CD8-positive, alpha-beta memory T cell (primary cell): ENCODE measurements at regions of chr11 and their contacts with region 1.

Region 1: GRCh38 chr11:18721561-18722292 is 4.3 kb downstream of the IGSF22 start:
- DNase-seq: peak; percentile 28 to 55 (median 39)
- H3K4me3 ChIP-seq: peak overlapping the region; percentile 78
- H3K4me3 Mint-ChIP-seq: peak overlapping the region; percentile 83 to 94 (median 94)
- H3K27ac ChIP-seq: no peak overlapping the region
- H3K27ac Mint-ChIP-seq: peak overlapping the region in 7 of 8 donors; percentile 54 to 96 (median 84)
- H3K4me1 ChIP-seq: no peaks in the 10 kb centered on the region
- H3K4me1 Mint-ChIP-seq: peaks cover 4 to 12% (median 9%) of the 10 kb centered on the region in 3 donors
- H3K27me3 ChIP-seq: no peaks in the 10 kb centered on the region
- H3K27me3 Mint-ChIP-seq: peaks cover 2 to 3% of the 10 kb centered on the region in 2 donors

Region 2: DNA sequence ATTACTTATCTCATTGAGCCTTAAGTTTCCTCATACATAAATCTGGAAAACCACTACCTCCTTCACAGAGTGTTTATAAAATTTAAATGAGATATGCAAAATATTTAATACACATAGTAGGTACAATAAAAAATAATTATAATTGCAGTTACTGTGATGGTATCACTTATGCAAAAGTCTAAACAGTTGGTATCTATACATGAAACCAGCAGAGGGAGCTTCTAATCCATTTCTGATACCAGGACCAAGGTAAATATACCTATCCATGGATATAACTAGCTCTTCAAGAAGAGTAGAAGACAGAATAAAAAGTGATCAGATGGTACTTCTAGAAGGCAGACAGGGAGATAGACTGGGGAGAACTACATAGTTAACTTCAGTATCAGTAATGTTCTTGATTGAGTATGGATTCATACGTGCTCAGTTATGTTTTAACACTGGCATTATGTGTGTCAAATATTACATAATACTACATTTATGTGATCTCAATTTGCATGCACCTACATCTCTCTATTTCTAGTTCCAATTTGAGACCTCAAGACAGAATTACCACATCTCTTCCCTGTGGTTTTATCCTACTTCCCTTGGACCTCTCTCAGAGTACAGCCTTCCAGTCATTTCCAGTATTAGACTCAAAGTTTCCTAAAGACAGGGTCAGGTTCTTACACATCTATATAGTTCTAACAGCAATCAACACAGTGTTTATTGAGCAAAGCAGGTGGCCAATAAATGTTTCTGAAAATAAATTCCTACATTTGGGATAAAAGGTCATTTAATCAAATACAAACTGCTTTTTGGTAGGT is 181.3 kb before region 1 on chr11:
- CTCF ChIA-PET with region 1: interaction called, 12 read pairs
- POLR2A ChIA-PET with region 1: no interaction called
- DNase-seq: peak in 2 of 5 donors; percentile 31 to 37
- H3K4me3 ChIP-seq: no peak overlapping the region
- H3K4me3 Mint-ChIP-seq: no peak overlapping the region
- H3K27ac ChIP-seq: no peak overlapping the region
- H3K27ac Mint-ChIP-seq: peak overlapping the region in 5 of 8 donors; percentile 11 to 81 (median 66)
- H3K4me1 ChIP-seq: no peaks in the 10 kb centered on the region
- H3K4me1 Mint-ChIP-seq: peaks cover 0 to 6% (median 0%) of the 10 kb centered on the region in 3 donors
- H3K27me3 ChIP-seq: no peaks in the 10 kb centered on the region
- H3K27me3 Mint-ChIP-seq: no peaks in the 10 kb centered on the region

Region 3: GRCh38 chr11:18634140-18635032 is 87.3 kb before region 1 on chr11 and contains the start of gene SPTY2D1:
- CTCF ChIA-PET with region 1: interaction called, 11 read pairs
- POLR2A ChIA-PET with region 1: no interaction called
- DNase-seq: peak; percentile 94 to 99 (median 98)
- H3K4me3 ChIP-seq: peak within 1 kb of the TSS; percentile 99
- H3K4me3 Mint-ChIP-seq: peak within 1 kb of the TSS; percentile 90 to 99 (median 96)
- H3K27ac ChIP-seq: peak within 1 kb of the TSS; percentile 93
- H3K27ac Mint-ChIP-seq: peak within 1 kb of the TSS; percentile 96 to 100 (median 98)
- H3K4me1 ChIP-seq: peaks cover 17% of the 10 kb centered on the region
- H3K4me1 Mint-ChIP-seq: peaks cover 27 to 39% (median 38%) of the 10 kb centered on the region in 3 donors
- H3K27me3 ChIP-seq: no peaks in the 10 kb centered on the region
- H3K27me3 Mint-ChIP-seq: peaks cover 4 to 5% of the 10 kb centered on the region in 2 donors
- total RNA-seq, gene SPTY2D1: 23.7 to 27.3 TPM

Region 4: GRCh38 chr11:18698341-18699268 is 23.1 kb before region 1 on chr11 and contains the start of gene TMEM86A:
- CTCF ChIA-PET with region 1: interaction called, 44 read pairs
- POLR2A ChIA-PET with region 1: no interaction called
- DNase-seq: peak; percentile 87 to 95 (median 91)
- H3K4me3 ChIP-seq: peak within 1 kb of the TSS; percentile 29
- H3K4me3 Mint-ChIP-seq: peak within 1 kb of the TSS; percentile 77 to 92 (median 85)
- H3K27ac ChIP-seq: no peak within 1 kb of the TSS
- H3K27ac Mint-ChIP-seq: peak within 1 kb of the TSS; percentile 48 to 96 (median 88)
- H3K4me1 ChIP-seq: peaks cover 12% of the 10 kb centered on the region
- H3K4me1 Mint-ChIP-seq: peaks cover 12 to 19% (median 13%) of the 10 kb centered on the region in 3 donors
- H3K27me3 ChIP-seq: no peaks in the 10 kb centered on the region
- H3K27me3 Mint-ChIP-seq: no peaks in the 10 kb centered on the region
- total RNA-seq, gene TMEM86A: 1.0 to 1.3 TPM

Region 5: DNA sequence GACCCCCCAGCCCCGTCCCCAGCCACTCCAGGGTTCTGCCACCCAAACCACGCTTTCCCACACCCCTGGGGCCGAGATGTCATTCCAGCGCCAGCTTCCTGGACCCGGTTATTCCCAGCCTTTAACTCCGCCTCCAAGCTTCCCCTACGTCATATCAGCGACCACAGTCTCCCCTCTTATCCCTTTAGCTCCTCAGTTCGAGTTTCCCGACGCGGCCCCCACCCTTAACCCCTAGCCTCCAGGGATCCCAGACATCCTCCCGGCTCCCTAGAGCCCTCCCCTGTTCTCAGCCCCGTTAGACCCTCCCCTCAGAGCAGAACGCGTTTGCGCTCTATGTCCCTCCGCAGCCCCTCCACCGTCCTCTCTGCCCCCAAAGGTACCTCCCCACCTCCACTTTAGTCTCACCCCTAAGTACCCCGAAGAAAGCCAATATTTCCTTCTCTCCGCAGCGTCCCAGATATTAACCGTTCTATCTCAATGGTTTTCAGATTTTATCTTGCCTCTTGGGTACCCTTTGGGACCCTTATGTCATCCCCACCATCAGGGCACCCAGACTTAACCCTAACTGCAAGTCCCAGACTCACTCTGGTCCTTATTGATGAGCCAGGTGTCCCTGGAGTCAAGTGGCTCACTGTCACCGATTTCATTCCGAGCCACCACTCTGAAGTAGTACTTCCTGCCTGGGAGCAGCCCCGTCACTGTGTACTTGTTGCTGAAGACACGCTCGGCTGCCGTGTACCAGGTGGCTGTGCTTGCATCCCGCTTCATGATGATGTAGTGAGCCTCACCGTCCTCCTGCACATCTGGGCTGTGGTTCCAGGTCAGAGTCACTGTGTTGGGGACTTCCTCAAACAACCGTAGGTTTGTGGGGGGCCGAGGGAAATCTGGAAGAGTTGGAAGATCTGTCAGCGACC is 15.1 kb before region 1 on chr11:
- CTCF ChIA-PET with region 1: interaction called, 44 read pairs
- POLR2A ChIA-PET with region 1: no interaction called
- DNase-seq: peak in 4 of 5 donors; percentile 53 to 76 (median 57)
- H3K4me3 ChIP-seq: peak overlapping the region; percentile 72
- H3K4me3 Mint-ChIP-seq: peak overlapping the region; percentile 88 to 94 (median 92)
- H3K27ac ChIP-seq: peak overlapping the region; percentile 19
- H3K27ac Mint-ChIP-seq: peak overlapping the region; percentile 38 to 98 (median 94)
- H3K4me1 ChIP-seq: peaks cover 10% of the 10 kb centered on the region
- H3K4me1 Mint-ChIP-seq: peaks cover 16 to 31% (median 21%) of the 10 kb centered on the region in 3 donors
- H3K27me3 ChIP-seq: no peaks in the 10 kb centered on the region
- H3K27me3 Mint-ChIP-seq: peaks cover 0 to 1% of the 10 kb centered on the region in 2 donors

Region 6: GRCh38 chr11:18731949-18732821 is 10.5 kb after region 1 on chr11:
- CTCF ChIA-PET with region 1: interaction called, 34 read pairs
- POLR2A ChIA-PET with region 1: no interaction called
- DNase-seq: peak; percentile 42 to 79 (median 59)
- H3K4me3 ChIP-seq: no peak overlapping the region
- H3K4me3 Mint-ChIP-seq: no peak overlapping the region
- H3K27ac ChIP-seq: no peak overlapping the region
- H3K27ac Mint-ChIP-seq: peak overlapping the region in 2 of 8 donors; percentile 26 to 64
- H3K4me1 ChIP-seq: peaks cover 8% of the 10 kb centered on the region
- H3K4me1 Mint-ChIP-seq: peaks cover 8 to 13% (median 11%) of the 10 kb centered on the region in 3 donors
- H3K27me3 ChIP-seq: no peaks in the 10 kb centered on the region
- H3K27me3 Mint-ChIP-seq: peaks cover 6 to 11% of the 10 kb centered on the region in 2 donors

Region 7: GRCh38 chr11:18741783-18742182 is 20.1 kb after region 1 on chr11:
- CTCF ChIA-PET with region 1: interaction called, 12 read pairs
- POLR2A ChIA-PET with region 1: interaction called, 3 read pairs
- DNase-seq: no peak
- H3K4me3 ChIP-seq: no peak overlapping the region
- H3K4me3 Mint-ChIP-seq: no peak overlapping the region
- H3K27ac ChIP-seq: no peak overlapping the region
- H3K27ac Mint-ChIP-seq: no peak overlapping the region
- H3K4me1 ChIP-seq: no peaks in the 10 kb centered on the region
- H3K4me1 Mint-ChIP-seq: no peaks in the 10 kb centered on the region
- H3K27me3 ChIP-seq: no peaks in the 10 kb centered on the region
- H3K27me3 Mint-ChIP-seq: peaks cover 0 to 4% of the 10 kb centered on the region in 2 donors

Region 8: GRCh38 chr11:18834754-18835466 is 113.2 kb after region 1 on chr11:
- CTCF ChIA-PET with region 1: no interaction called
- POLR2A ChIA-PET with region 1: no interaction called
- DNase-seq: no peak
- H3K4me3 ChIP-seq: no peak overlapping the region
- H3K4me3 Mint-ChIP-seq: no peak overlapping the region
- H3K27ac ChIP-seq: no peak overlapping the region
- H3K27ac Mint-ChIP-seq: no peak overlapping the region
- H3K4me1 ChIP-seq: no peaks in the 10 kb centered on the region
- H3K4me1 Mint-ChIP-seq: no peaks in the 10 kb centered on the region
- H3K27me3 ChIP-seq: peaks cover 4% of the 10 kb centered on the region
- H3K27me3 Mint-ChIP-seq: peaks cover 30 to 84% of the 10 kb centered on the region in 2 donors